SK-N-SH (cell line): ENCODE measurements at regions of chr17 and their contacts with region 1.

Region 1: GRCh38 chr17:63406689-63407330 is 39.3 kb downstream of the CYB561 start:
- DNase-seq: peak; percentile 82
- H3K4me3 ChIP-seq: no peak overlapping the region
- H3K27ac ChIP-seq: peak overlapping the region; percentile 76 to 84
- H3K4me1 ChIP-seq: peaks cover 17 to 21% of the 10 kb centered on the region in 2 experiments
- H3K27me3 ChIP-seq: no peaks in the 10 kb centered on the region
- CTCF ChIP-seq: peak; percentile 99
- EP300 ChIP-seq: no peak; a peak in 1 of 4 replicates
- RAD21 ChIP-seq: peak; percentile 99

Region 2: GRCh38 chr17:62968445-62968923 is 438.3 kb before region 1 on chr17:
- CTCF ChIA-PET with region 1: interaction called, 16 read pairs
- POLR2A ChIA-PET with region 1: no interaction called
- DNase-seq: peak; percentile 87
- H3K4me3 ChIP-seq: peak overlapping the region; percentile 77 to 90
- H3K27ac ChIP-seq: peak overlapping the region; percentile 51 to 92
- H3K4me1 ChIP-seq: peaks cover 4 to 32% of the 10 kb centered on the region in 2 experiments; a peak in 3 of 4 replicates
- H3K27me3 ChIP-seq: no peaks in the 10 kb centered on the region
- CTCF ChIP-seq: peak; percentile 99
- EP300 ChIP-seq: peak in 1 of 2 experiments; percentile 58; a peak in 1 of 4 replicates
- RAD21 ChIP-seq: peak; percentile 99

Region 3: DNA sequence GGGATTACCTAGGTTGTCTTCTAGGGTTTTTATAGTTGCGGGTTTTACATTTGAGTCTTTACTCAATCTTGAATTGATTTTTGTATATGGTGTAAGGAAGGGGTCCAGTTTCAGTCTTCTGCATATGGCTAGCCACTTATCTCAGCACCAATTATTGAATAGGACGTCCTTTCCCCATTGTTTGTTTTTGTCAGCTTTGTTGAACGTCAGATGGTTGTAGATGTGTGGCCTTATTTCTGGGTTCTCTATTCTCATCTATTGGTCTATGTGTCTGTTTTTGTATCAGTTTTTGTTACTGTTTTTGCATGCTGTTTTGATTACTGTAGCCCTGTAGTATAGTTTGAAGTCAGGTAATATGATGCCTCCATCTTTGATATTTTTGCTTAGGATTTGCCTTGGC is 348.3 kb before region 1 on chr17:
- CTCF ChIA-PET with region 1: interaction called, 11 read pairs
- POLR2A ChIA-PET with region 1: no interaction called
- DNase-seq: no peak
- H3K4me3 ChIP-seq: no peak overlapping the region
- H3K27ac ChIP-seq: no peak overlapping the region
- H3K4me1 ChIP-seq: no peaks in the 10 kb centered on the region
- H3K27me3 ChIP-seq: no peaks in the 10 kb centered on the region
- CTCF ChIP-seq: no peak
- EP300 ChIP-seq: no peak
- RAD21 ChIP-seq: no peak

Region 4: DNA sequence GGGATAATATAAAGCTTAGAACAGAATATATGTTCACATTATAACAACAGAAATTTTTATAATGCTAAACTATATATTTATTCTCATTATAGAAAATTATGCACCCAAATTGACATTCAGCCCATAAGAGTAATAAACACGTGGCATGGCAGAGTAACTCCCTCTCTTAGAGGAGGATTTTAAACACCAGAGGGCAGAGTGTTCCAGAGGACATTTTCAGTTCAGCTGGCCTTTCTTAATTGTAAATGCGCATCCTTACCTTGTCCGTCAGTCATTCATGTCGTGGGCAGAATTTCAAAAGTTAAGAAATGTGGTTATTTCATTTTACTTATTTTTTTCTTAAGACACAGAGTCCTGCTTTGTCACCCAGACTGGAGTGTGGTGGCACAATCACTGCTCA is 293.6 kb before region 1 on chr17:
- CTCF ChIA-PET with region 1: interaction called, 41 read pairs
- POLR2A ChIA-PET with region 1: interaction called, 3 read pairs
- DNase-seq: no peak
- H3K4me3 ChIP-seq: no peak overlapping the region
- H3K27ac ChIP-seq: no peak overlapping the region
- H3K4me1 ChIP-seq: peaks cover 10 to 21% of the 10 kb centered on the region in 2 experiments; a peak in 3 of 4 replicates
- H3K27me3 ChIP-seq: no peaks in the 10 kb centered on the region
- CTCF ChIP-seq: peak; percentile 47
- EP300 ChIP-seq: no peak
- RAD21 ChIP-seq: peak; percentile 45

Region 5: DNA sequence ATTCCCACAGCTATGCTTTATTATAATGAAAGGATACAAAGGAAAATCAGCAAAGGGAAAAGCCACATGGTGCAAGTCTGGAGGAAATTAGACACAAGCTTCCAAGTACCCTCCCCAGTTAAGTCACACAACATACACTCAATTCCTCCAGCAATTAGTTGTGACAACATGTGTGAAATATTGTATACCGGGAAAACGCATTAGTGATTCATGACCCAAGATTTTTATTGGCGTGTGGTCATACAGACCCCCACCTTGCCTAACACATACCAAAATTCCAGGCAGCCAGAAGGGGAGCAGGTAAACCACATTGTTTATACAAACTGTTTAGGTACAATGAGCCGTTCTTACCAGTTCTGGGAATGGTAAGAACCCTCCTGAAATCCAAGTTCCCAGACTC is 121.3 kb before region 1 on chr17:
- CTCF ChIA-PET with region 1: interaction called, 10 read pairs
- POLR2A ChIA-PET with region 1: no interaction called
- DNase-seq: no peak
- H3K4me3 ChIP-seq: peak overlapping the region in 1 of 2 experiments; percentile 7; a peak in 1 of 4 replicates
- H3K27ac ChIP-seq: no peak overlapping the region
- H3K4me1 ChIP-seq: peaks cover 0 to 6% of the 10 kb centered on the region in 2 experiments; a peak in 3 of 4 replicates
- H3K27me3 ChIP-seq: no peaks in the 10 kb centered on the region
- CTCF ChIP-seq: no peak
- EP300 ChIP-seq: no peak
- RAD21 ChIP-seq: no peak

Region 6: GRCh38 chr17:63419949-63420867 is 13.4 kb after region 1 on chr17:
- CTCF ChIA-PET with region 1: interaction called, 68 read pairs
- POLR2A ChIA-PET with region 1: no interaction called
- DNase-seq: no peak
- H3K4me3 ChIP-seq: no peak overlapping the region
- H3K27ac ChIP-seq: no peak overlapping the region
- H3K4me1 ChIP-seq: peaks cover 0 to 8% of the 10 kb centered on the region in 2 experiments; a peak in 2 of 4 replicates
- H3K27me3 ChIP-seq: no peaks in the 10 kb centered on the region
- CTCF ChIP-seq: no peak
- EP300 ChIP-seq: no peak
- RAD21 ChIP-seq: no peak